Caco-2 (cell line): ENCODE measurements at regions of chr12 and their contacts with region 1.

Region 1: DNA sequence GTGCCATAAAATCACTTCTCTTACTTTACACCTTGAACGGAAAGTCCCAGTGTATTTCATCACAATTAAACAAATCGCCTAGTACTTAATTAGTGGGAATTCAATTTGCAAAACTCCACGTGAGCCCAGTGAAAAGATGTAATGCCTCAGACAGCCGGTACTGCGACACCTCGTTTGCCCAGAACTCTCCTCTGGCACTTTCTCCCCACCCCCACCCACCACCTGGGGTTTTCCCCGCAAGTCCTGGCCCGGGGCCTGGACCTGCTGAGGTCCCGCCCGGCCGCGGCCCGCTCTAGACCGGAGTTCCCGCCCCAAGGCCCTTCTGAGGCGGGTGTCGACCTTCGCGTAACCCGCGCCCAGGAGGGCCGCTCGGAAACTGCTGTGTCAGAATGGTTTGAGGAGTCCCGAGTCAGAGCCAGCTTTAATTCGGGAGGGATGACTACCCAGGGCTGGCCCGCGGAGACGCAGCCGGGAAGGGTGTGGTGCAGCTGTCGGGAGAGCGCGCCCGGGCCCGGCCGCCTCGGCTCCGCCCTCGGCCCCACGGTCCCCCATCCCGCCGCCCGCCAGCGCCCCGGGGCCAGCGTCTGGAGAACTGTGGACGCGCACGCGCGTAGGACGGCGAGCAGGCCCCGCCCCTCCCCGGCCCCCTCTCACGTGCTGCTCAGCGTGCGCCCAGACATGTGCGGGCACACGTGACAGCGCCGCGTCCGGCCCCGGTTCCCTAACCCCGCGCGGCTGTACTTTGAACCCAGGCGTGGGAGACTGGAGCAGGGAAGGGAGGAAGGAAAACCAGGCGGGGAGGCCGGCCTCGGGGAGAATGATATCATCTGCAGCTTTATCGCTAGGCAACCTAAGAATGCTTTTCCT is 10.8 kb downstream of the BHLHE41 start:
- DNase-seq: peak; percentile 98
- H3K4me3 ChIP-seq: peak overlapping the region; percentile 77
- H3K4me3 Mint-ChIP-seq: peak overlapping the region; percentile 78
- H3K27ac Mint-ChIP-seq: peak overlapping the region; percentile 90
- H3K4me1 ChIP-seq: peaks cover 23% of the 10 kb centered on the region
- H3K4me1 Mint-ChIP-seq: peaks cover 18% of the 10 kb centered on the region
- H3K27me3 ChIP-seq: no peaks in the 10 kb centered on the region
- H3K27me3 Mint-ChIP-seq: peaks cover 2% of the 10 kb centered on the region
- CTCF ChIP-seq: peak; percentile 12 to 48

Region 2: DNA sequence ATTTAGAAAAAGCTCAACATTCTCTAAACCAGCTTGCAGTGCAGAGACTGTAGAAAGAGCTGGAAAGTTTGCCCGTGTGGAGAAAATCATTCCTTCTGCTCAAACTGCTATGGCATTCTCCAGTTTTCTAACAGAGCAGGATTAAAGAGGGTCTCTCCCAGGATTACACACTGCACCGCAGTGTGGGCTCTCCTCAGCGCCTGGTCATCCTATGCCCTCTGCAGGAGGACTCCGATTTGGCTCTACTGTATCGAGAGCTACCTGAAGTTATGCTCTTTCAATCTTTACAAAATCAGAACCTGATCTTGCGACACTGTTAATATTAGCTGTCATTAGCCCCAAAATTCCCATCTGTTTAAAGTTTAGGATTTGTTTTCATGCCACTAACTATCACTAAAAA is 22.3 kb before region 1 on chr12:
- CTCF ChIA-PET with region 1: interaction called, 4 read pairs
- POLR2A ChIA-PET with region 1: no interaction called
- intact Hi-C with region 1: loop called (anchors 1 kb)
- DNase-seq: peak in 1 of 2 experiments; percentile 42
- H3K4me3 ChIP-seq: no peak overlapping the region
- H3K4me3 Mint-ChIP-seq: peak overlapping the region; percentile 7
- H3K27ac Mint-ChIP-seq: peak overlapping the region; percentile 84
- H3K4me1 ChIP-seq: peaks cover 61% of the 10 kb centered on the region
- H3K4me1 Mint-ChIP-seq: peaks cover 45% of the 10 kb centered on the region
- H3K27me3 ChIP-seq: no peaks in the 10 kb centered on the region
- H3K27me3 Mint-ChIP-seq: no peaks in the 10 kb centered on the region
- CTCF ChIP-seq: peak; percentile 30 to 34

Region 3: GRCh38 chr12:26226629-26227360 is 112.7 kb after region 1 on chr12:
- CTCF ChIA-PET with region 1: no interaction called
- POLR2A ChIA-PET with region 1: no interaction called
- intact Hi-C with region 1: no loop called
- DNase-seq: peak; percentile 42 to 50
- H3K4me3 ChIP-seq: peak overlapping the region; percentile 32
- H3K4me3 Mint-ChIP-seq: peak overlapping the region; percentile 68
- H3K27ac Mint-ChIP-seq: no peak overlapping the region
- H3K4me1 ChIP-seq: no peaks in the 10 kb centered on the region
- H3K4me1 Mint-ChIP-seq: no peaks in the 10 kb centered on the region
- H3K27me3 ChIP-seq: no peaks in the 10 kb centered on the region
- H3K27me3 Mint-ChIP-seq: peaks cover 12% of the 10 kb centered on the region
- CTCF ChIP-seq: no peak

Region 4: DNA sequence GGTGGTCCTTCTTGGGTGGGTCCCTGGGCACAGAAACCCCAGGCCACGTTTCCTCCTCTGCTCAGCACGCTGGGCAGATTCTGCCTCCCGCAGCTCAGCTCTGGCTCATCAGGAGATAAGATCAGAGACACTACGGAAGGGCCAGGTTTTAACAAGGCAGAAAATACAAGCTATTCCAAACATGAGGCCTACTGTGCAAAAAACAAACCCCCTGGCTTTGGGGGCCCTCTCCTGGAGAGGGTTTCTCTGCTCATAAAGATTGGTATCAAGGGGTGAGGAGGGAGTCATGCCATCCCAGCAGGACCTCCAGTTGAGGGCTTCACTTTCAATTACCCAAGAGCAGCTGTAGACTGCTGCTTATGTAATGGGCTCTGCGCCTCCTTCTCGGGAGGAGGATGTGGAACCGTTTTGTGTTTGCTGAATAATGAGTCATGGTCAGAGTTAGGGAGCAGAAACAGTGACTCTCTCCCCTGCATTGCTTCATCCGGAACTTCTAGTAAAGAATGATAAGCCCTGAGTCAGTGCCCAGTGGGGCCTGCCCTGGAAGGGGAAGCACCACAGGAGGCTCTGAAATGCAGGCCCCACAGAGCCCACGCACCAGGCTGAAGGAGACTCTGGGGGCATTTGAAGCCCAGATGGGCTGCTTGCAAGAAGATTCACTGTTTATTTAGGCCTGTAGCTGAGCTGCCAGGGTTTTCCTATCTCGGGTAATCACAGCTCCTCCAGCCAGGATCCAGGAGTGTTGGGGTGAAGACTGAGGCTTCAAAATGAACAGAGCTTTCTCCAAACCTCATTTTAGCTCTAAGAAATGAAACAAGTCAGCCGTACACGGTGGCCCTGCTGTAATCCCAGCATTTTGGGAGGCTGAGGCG is 160.6 kb after region 1 on chr12:
- CTCF ChIA-PET with region 1: interaction called, 6 read pairs
- POLR2A ChIA-PET with region 1: no interaction called
- intact Hi-C with region 1: loop called (anchors 2 kb)
- DNase-seq: peak; percentile 84 to 88
- H3K4me3 ChIP-seq: no peak overlapping the region
- H3K4me3 Mint-ChIP-seq: peak overlapping the region; percentile 6
- H3K27ac Mint-ChIP-seq: peak overlapping the region; percentile 92
- H3K4me1 ChIP-seq: peaks cover 47% of the 10 kb centered on the region
- H3K4me1 Mint-ChIP-seq: peaks cover 30% of the 10 kb centered on the region
- H3K27me3 ChIP-seq: no peaks in the 10 kb centered on the region
- H3K27me3 Mint-ChIP-seq: no peaks in the 10 kb centered on the region
- CTCF ChIP-seq: no peak

Region 5: DNA sequence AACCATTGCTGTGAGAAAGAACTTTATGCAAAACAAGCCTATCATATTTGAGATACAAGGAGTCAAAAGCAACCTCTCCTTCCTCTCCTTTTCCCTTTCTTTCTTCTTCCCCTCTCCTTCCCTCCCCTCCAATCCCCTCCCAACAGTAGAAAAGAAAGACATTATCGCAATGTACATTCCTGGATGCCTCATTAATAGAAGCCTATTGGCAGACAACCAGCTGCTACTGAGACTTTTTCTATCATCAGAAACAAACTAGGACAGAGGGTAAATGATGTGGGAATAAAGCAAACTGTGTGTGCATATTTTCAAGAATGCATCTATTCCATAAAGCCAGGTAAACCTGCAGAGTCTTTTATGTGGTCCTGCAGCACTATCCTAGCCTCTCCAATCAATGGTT is 481.7 kb after region 1 on chr12:
- CTCF ChIA-PET with region 1: no interaction called
- POLR2A ChIA-PET with region 1: no interaction called
- intact Hi-C with region 1: no loop called
- DNase-seq: no peak
- H3K4me3 ChIP-seq: no peak overlapping the region
- H3K4me3 Mint-ChIP-seq: no peak overlapping the region
- H3K27ac Mint-ChIP-seq: no peak overlapping the region
- H3K4me1 ChIP-seq: no peaks in the 10 kb centered on the region
- H3K4me1 Mint-ChIP-seq: peaks cover 10% of the 10 kb centered on the region
- H3K27me3 ChIP-seq: no peaks in the 10 kb centered on the region
- H3K27me3 Mint-ChIP-seq: no peaks in the 10 kb centered on the region
- CTCF ChIP-seq: no peak